Heart right ventricle (tissue), 16 donors: ENCODE measurements at regions of chr12 and their contacts with region 1.

Region 1: GRCh38 chr12:52582971-52583456 is 9.4 kb upstream of the KRT74 start:
- DNase-seq: peak in 1 of 2 donors; percentile 58
- ATAC-seq: peak; percentile 39 to 83 (median 77)
- H3K4me3 ChIP-seq: no peak overlapping the region
- H3K27ac ChIP-seq: no peak overlapping the region
- H3K4me1 ChIP-seq: no peaks in the 10 kb centered on the region
- H3K27me3 ChIP-seq: peaks cover 0 to 14% (median 6%) of the 10 kb centered on the region in 7 donors
- CTCF ChIP-seq: peak; percentile 43 to 73 (median 69)

Region 2: DNA sequence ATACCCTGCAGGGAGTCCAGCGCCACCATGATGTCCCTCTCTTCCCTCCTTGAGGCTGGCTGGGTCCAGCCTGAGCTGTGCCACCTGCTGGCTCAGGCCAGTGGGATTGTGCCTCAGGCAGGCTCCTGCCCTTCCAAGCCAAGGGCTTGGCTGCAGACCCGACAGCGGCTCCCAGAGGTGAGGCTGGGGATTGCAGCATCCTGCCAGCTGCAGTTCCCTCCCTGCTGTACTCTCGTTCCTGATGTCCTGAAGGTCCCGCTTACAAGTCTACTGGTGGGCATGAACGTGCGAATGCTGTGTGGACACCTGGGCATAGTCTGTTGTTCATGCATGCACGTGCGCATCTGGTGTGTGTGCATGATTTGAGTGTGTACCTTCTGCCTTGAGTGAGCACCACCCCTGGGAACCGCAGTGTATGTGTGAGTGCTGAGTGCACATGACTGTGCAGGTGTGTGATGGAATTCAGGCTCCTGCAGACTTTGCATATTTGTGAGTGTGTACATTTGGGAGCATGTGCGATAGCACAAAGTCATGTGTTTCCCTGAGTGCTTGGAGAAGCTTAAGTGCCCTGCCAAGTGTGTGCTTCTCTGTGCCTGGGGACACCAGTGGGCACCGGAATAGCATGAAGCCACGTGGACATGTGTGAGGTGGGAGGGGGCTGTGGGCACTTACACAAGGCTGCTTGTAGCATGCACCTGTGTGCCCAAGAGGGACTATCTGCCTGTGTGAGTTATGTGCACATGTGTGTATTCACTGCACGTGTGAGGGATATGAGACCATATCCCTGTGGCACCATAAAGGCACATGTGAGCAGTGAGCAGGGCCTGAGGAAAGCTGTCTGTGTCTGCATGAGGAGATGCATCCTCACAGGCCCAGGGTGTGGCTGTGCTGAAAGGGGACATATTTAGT is 369.2 kb before region 1 on chr12:
- intact Hi-C with region 1: no loop called
- DNase-seq: peak; percentile 58 to 81
- ATAC-seq: peak; percentile 77 to 94 (median 88)
- H3K4me3 ChIP-seq: no peak overlapping the region
- H3K27ac ChIP-seq: no peak overlapping the region
- H3K4me1 ChIP-seq: peaks cover 0 to 39% (median 16%) of the 10 kb centered on the region in 9 donors
- H3K27me3 ChIP-seq: peaks cover 0 to 10% (median 0%) of the 10 kb centered on the region in 7 donors
- CTCF ChIP-seq: peak; percentile 92 to 98 (median 96)

Region 3: DNA sequence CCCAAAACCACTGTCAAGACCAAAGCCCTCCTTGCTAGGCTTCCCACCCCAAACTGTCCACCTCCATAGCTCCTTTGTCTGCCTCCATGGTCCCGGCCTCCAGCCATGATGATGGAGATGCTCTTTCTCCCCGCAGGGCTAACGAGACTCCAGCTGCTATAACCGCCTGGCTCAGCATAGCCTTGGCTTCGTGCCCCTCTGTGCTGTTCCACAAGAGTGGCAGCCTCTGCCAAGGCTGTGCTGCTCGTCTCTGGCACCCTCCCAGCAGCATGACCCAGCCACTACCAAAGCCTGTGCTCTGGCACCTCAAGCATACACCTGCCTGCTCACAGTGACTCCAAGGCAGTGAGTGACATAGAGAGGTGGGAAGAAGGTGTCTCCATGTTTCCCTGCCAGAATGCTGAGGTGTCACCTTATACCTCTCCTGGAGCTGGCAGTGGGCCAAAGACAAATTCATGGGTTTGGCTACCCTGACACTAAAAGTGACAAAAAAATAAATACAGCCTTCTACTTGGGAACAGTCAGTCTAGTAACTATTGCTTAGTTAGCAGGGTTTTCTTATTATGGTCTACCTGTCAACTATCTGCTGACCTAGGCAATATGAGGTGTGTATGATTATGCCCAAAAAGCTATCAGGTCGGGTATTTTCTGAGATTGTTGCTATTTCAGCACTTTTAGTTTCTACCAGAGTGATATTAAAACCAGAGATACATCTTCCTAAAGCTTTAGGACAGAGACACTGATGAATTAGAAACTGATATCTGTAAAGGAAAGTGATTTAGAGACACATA is 51.4 kb after region 1 on chr12:
- intact Hi-C with region 1: no loop called
- DNase-seq: peak; percentile 73 to 75
- ATAC-seq: peak; percentile 91 to 99 (median 96)
- H3K4me3 ChIP-seq: no peak overlapping the region
- H3K27ac ChIP-seq: no peak overlapping the region
- H3K4me1 ChIP-seq: peaks cover 0 to 2% (median 0%) of the 10 kb centered on the region in 9 donors
- H3K27me3 ChIP-seq: peaks cover 0 to 37% (median 10%) of the 10 kb centered on the region in 7 donors
- CTCF ChIP-seq: no peak

Region 4: DNA sequence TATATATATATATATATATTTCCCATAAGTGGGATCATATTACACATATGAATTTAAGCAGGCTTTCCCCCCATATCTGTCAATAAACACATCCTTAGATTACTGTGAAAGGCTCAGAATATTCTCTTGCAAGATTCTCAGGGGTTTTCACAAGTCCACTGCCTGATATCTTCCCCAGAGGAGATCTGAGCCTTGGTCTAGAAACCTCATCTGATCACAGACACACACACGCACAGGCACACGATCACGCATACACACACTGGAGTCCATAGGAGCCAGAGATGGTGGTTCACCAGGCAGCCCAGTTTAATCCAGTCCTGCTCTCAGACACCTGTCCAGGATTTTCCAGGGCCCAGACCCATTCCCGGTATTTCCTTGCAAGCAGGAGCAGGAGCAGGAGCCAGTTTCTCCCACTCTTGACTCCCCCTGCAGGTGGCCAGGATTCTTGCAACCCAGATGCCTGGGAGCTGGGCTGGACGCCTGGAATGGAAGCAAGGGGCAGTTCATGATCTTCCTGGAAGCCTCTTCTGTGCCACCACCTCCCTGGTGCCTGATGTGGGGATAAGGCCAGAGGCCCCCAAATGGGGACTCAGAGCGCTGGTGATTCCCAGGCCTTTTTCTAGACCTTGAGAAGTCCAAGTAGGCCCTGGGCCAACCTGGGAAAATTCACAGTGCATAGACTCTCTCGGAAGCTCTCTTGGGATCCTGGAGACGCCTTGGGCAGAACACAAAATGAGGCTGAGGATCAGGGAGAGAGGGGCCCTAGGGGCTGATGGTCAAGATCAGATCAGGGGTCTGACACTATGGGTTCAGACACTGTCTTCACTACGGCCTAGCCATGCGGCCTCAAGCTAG is 282.3 kb after region 1 on chr12:
- intact Hi-C with region 1: loop called in 7 of 10 experiments (anchors 1 to 5 kb)
- DNase-seq: peak; percentile 50 to 62
- ATAC-seq: peak in 7 of 8 donors; percentile 50 to 76 (median 60)
- H3K4me3 ChIP-seq: no peak overlapping the region
- H3K27ac ChIP-seq: no peak overlapping the region
- H3K4me1 ChIP-seq: peaks cover 0 to 6% (median 0%) of the 10 kb centered on the region in 9 donors
- H3K27me3 ChIP-seq: no peaks in the 10 kb centered on the region
- CTCF ChIP-seq: peak; percentile 47 to 77 (median 75)

Region 5: GRCh38 chr12:52870351-52871290 is 287.6 kb after region 1 on chr12:
- intact Hi-C with region 1: loop called in 8 of 10 experiments (anchors 1 to 5 kb)
- DNase-seq: peak; percentile 41 to 69
- ATAC-seq: peak in 7 of 8 donors; percentile 4 to 49 (median 41)
- H3K4me3 ChIP-seq: no peak overlapping the region
- H3K27ac ChIP-seq: peak overlapping the region in 6 of 10 donors; percentile 4 to 76 (median 10)
- H3K4me1 ChIP-seq: peaks cover 3 to 43% (median 21%) of the 10 kb centered on the region in 9 donors
- H3K27me3 ChIP-seq: no peaks in the 10 kb centered on the region
- CTCF ChIP-seq: peak; percentile 40 to 79 (median 66)

Region 6: GRCh38 chr12:52879394-52880351 is 296.7 kb after region 1 on chr12:
- intact Hi-C with region 1: loop called in 6 of 10 experiments (anchors 1 to 5 kb)
- DNase-seq: peak; percentile 76 to 89
- ATAC-seq: peak; percentile 85 to 93 (median 90)
- H3K4me3 ChIP-seq: peak overlapping the region in 8 of 10 donors; percentile 4 to 36 (median 24)
- H3K27ac ChIP-seq: no peak overlapping the region
- H3K4me1 ChIP-seq: peaks cover 0 to 20% (median 12%) of the 10 kb centered on the region in 9 donors
- H3K27me3 ChIP-seq: peaks cover 0 to 25% (median 17%) of the 10 kb centered on the region in 7 donors
- CTCF ChIP-seq: peak; percentile 58 to 77 (median 65)

Region 7: DNA sequence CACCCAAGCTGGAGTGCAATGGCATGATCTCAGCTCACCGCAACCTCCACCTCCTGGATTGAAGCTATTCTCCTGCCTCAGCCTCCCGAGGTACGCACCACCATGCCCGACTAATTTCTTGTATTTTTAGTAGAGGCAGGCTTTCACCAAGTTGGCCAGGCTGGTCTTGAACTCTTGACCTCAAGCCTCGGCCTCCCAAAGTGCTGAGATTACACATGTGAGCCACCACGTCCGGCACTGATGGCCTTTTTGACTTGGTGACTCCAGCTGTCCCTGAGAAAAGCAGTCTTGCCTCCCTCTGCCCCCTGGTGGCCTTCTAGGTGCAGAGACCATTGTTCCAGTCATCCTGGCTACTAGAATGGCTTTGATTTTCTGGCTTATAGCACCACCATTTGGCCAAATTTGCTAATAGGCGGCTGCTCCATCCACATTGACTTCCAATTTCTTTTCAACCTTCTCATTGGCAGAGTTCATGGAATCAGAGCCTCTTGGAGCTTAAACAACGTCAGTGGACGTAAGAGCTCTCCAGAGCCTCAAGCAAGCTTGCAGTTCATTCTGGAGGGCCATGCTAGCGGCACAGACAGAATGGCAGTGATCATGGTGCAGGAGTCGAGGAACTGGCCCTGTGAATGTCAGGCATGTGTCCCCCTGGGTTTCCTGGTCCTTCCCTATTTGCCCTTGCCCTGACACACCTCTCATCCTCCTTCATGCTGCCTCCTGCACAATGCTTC is 397.8 kb after region 1 on chr12:
- intact Hi-C with region 1: loop called in 3 of 10 experiments (anchors 5 to 10 kb)
- DNase-seq: peak; percentile 82 to 92
- ATAC-seq: peak; percentile 89 to 97 (median 93)
- H3K4me3 ChIP-seq: no peak overlapping the region
- H3K27ac ChIP-seq: no peak overlapping the region
- H3K4me1 ChIP-seq: no peaks in the 10 kb centered on the region
- H3K27me3 ChIP-seq: peaks cover 0 to 32% (median 11%) of the 10 kb centered on the region in 7 donors
- CTCF ChIP-seq: peak; percentile 90 to 100 (median 97)